ENCODE measurements at regions of chr10 and their contacts with region 1.

Region 1: DNA sequence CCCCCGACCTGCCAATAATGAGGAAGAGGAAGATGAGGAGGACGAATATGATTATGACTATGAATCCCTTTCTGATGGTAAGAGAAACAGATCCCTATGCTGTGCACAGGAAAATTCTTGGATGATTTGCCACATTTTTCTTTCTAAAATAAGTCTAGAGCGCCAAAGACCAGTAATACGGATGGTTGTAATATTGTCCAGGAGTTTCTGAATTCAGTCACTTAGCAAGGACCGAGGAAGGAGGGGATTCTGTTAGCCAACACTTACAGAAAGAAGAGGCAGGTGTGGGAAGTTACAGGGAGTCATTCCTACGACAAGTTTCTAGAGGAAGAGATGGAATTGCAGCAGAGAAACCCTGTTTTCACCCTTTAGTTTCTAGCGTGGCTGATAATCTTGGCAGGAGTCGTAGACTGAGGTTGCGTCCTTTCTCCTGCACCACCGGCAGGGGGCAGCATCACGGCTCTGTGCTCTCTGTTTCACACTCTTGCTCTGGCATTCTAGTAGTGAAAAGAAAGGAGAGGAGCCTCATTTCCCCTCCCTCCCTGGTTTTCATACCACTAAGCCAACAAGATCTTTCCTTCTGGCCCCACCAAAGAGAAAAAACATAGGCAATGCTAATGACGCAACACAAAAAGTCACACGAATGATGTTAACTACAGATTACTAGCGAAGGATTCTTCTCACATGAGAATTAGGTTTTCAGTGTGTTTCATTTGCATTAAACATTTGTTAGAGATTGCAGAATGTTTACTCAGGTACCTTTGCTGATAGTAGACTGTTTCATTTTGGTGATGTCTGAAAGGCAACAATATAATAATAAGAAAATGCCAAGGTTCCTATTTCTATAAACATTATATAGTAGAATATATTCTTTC is 82.7 kb downstream of the NOC3L start:
- DNase-seq: peak in 1 of 2 experiments; percentile 19
- H3K4me3 ChIP-seq: no peak overlapping the region
- H3K27ac ChIP-seq: no peak overlapping the region
- H3K4me1 ChIP-seq: no peaks in the 10 kb centered on the region
- H3K27me3 ChIP-seq: no peaks in the 10 kb centered on the region
- CTCF ChIP-seq: peak; percentile 83

Region 2: DNA sequence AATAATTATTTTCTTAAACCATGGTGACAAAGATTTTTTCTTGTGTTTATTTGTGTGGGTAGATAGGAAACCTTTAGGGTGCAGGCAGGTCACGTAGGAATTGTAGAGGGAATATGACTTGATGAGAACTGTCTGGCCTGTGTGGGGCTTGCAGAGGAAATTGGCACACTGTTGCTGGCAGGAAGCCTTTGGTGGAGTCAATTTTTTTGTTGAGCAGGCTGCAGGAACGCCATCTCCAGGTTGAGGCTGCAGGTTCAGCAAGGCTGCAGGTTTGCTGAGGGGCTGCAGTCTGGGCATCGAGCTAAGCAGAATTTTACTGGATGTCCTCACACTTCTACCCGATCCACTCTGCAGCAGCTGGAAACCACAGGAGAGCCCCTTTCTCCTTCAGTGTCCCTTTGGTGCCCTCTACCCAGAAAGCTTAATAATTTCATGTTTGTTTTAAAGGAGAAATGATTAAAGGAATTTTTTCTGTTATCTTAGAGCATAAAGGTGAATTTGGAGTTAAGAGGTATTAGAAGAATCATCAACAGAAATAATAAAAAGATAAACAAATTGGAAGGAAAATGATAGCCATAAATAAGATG is 159.3 kb after region 1 on chr10:
- CTCF ChIA-PET with region 1: no interaction called
- POLR2A ChIA-PET with region 1: no interaction called
- intact Hi-C with region 1: loop called (anchors 2 kb)
- DNase-seq: no peak
- H3K4me3 ChIP-seq: no peak overlapping the region
- H3K27ac ChIP-seq: no peak overlapping the region
- H3K4me1 ChIP-seq: no peaks in the 10 kb centered on the region
- H3K27me3 ChIP-seq: no peaks in the 10 kb centered on the region
- CTCF ChIP-seq: no peak

Region 3: DNA sequence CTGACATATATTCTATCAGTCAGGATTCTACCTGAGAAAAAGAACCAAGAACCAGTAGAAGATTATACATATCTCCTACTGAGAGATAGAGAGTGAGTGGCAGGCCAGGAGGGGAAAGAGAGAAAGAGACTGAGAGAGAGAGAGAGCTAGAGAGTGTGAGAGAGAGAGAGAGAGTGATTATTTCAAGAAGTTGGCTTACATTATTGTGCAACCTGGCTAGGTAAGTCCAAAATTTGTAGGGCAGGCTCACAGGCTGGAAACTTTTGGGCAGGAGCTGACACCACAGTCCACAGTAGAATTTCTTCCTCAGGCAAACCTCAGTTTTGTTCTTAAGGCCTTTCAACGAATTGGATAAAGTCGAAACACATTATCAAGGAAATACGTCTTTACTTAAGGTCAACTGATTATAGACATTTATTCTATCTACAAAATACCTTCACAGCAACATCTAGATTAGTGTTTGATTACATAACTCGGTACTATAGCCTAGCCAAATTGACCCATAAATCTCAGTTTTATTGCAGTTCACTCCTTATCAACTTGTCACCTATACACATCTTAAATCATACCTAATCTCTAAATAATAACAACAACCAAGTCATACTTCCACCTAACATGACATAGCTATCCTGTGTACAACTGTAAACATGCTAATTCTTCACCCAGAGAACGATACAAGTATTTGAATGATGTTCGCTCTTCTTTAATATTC is 386.5 kb after region 1 on chr10:
- CTCF ChIA-PET with region 1: no interaction called
- POLR2A ChIA-PET with region 1: no interaction called
- intact Hi-C with region 1: no loop called
- DNase-seq: no peak
- H3K4me3 ChIP-seq: no peak overlapping the region
- H3K27ac ChIP-seq: no peak overlapping the region
- H3K4me1 ChIP-seq: no peaks in the 10 kb centered on the region
- H3K27me3 ChIP-seq: no peaks in the 10 kb centered on the region
- CTCF ChIP-seq: no peak

Region 4: DNA sequence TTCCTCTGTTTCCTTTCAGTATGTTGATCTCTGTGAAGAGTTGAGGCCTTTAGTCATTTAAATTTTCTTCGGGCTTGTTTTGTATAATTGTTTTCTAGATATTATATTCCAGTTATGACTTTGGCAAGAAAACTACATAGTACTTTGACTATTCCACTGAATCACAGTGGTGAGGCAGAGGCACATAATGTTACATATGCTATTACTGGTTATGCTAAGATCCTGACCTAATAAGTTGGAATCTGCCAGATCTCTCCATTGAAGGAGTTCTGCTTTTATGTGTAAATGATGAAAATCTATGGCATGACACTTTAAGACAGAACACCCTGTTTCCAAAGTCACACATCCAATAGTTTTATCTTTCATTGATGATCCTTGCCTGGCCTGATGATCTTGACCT is 566.1 kb after region 1 on chr10:
- CTCF ChIA-PET with region 1: no interaction called
- POLR2A ChIA-PET with region 1: no interaction called
- intact Hi-C with region 1: no loop called
- DNase-seq: no peak
- H3K4me3 ChIP-seq: no peak overlapping the region
- H3K27ac ChIP-seq: no peak overlapping the region
- H3K4me1 ChIP-seq: no peaks in the 10 kb centered on the region
- H3K27me3 ChIP-seq: no peaks in the 10 kb centered on the region
- CTCF ChIP-seq: no peak